HepG2 (cell line): ENCODE measurements at regions of chr16 and their contacts with region 1.

Region 1: DNA sequence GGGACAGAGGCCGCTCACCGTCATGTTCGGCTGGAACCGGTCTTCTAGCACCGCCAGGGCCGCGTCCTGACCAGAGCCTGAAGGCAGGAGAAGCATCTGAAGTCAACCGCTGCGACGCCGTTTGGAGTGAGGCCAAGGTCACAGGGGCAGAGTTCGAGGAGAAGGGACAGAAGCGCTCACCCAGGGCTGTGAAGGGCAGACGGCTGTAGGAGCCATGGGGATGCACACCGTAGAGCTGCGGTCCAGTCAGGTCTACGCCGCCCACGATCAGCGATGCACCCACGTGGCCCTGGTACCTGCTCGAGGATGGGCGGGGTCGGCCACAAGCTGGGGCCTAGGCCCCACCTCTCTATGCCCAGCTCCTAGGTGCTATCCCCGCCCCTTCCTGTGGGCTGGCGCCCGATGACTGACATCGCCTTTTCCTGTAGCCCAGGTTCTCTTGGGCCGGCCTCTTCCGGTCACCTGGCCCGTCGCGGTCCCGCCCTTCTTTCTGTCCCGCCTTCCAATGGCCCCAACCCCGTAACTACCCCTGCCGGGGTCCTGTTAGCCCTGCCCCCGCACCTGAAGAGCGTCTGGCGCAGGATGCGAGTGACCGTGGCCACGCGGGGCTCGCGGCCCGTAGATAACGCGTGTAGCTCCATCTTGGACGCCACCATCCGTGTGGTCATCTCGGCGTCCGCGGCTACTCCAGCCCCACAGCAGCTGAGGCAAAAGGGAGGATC is 1.1 kb downstream of the PSMB10 start:
- DNase-seq: peak; percentile 98
- ATAC-seq: peak; percentile 85
- H3K4me3 ChIP-seq: peak overlapping the region; percentile 86 to 97 (median 97)
- H3K27ac ChIP-seq: peak overlapping the region; percentile 70
- H3K4me1 ChIP-seq: peaks cover 30% of the 10 kb centered on the region
- H3K27me3 ChIP-seq: no peaks in the 10 kb centered on the region; a peak in 1 of 5 replicates
- CTCF ChIP-seq: peak; percentile 27
- EP300 ChIP-seq: no peak
- POLR2A ChIP-seq: peak in 1 of 2 experiments; percentile 79; a peak in 2 of 4 replicates
- RAD21 ChIP-seq: peak; percentile 34; the same call in 1 of the 2 replicates

Region 2: GRCh38 chr16:67667817-67668494 is 267.6 kb before region 1 on chr16:
- CTCF ChIA-PET with region 1: no interaction called
- POLR2A ChIA-PET with region 1: no interaction called
- in situ Hi-C with region 1: loop called (anchors 10 kb)
- intact Hi-C with region 1: no loop called
- DNase-seq: peak; percentile 96
- ATAC-seq: peak; percentile 88
- H3K4me3 ChIP-seq: peak overlapping the region; percentile 77 to 96 (median 88)
- H3K27ac ChIP-seq: peak overlapping the region; percentile 21
- H3K4me1 ChIP-seq: peaks cover 39% of the 10 kb centered on the region
- H3K27me3 ChIP-seq: no peaks in the 10 kb centered on the region; a peak in 1 of 5 replicates
- CTCF ChIP-seq: peak; percentile 99
- EP300 ChIP-seq: no peak
- POLR2A ChIP-seq: peak in 1 of 2 experiments; percentile 24; a peak in 1 of 4 replicates
- RAD21 ChIP-seq: peak; percentile 98

Region 3: DNA sequence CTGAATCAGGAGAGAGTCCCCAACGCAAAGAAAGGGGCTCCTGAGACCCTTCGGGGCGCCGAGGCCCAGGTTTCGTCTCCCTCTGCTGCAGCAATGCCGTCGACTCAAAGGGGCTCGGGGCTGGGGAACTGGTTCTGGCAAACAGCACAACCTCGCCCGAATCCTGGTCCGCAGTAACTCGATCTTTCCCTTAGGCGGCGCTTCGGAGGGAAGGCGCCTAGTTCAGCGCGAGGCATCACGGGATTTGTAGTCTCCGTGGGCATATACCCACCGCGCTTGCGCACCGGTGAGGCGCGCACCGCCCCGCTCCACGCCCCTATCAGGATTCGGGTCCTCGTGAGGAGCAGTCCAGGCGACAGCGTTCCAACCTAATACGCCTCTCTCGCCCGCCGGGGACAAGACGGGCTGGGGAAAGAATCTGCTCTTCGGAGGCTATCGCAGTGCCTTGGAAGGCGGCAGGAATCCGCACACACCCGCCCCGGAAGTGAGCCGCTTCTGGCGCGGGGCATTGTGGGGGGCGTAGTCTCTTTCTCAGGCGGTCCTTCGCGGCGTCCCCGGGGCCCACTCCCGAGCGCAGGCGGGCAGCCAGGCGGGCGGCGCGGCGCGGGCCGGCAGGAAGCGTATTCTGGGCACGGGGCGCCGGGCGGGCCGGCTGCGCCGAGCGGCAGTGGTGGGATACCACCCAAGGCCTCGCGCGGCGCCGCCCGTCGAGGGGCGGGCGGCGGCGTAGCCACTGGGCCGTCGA is 93.6 kb before region 1 on chr16 and contains the start of gene THAP11:
- CTCF ChIA-PET with region 1: no interaction called
- POLR2A ChIA-PET with region 1: interaction called, 11 read pairs
- in situ Hi-C with region 1: no loop called
- intact Hi-C with region 1: no loop called
- DNase-seq: peak; percentile 96
- ATAC-seq: peak; percentile 46
- H3K4me3 ChIP-seq: peak within 1 kb of the TSS; percentile 80 to 97 (median 92)
- H3K27ac ChIP-seq: peak within 1 kb of the TSS; percentile 92
- H3K4me1 ChIP-seq: peaks cover 52% of the 10 kb centered on the region
- H3K27me3 ChIP-seq: no peaks in the 10 kb centered on the region; a peak in 1 of 5 replicates
- CTCF ChIP-seq: peak; percentile 99
- EP300 ChIP-seq: 0 out of 4 replicates have a peak, but pooled peaks of 1 of the 2 experiments have one; percentile 2
- POLR2A ChIP-seq: peak in 1 of 2 experiments; percentile 68; a peak in 1 of 4 replicates
- RAD21 ChIP-seq: peak; percentile 54
- total RNA-seq, gene THAP11: 53.4 and 53.8 TPM in 2 replicates

Region 4: GRCh38 chr16:67968400-67969253 is 33.1 kb after region 1 on chr16 and contains the start of gene SLC12A4:
- CTCF ChIA-PET with region 1: no interaction called
- POLR2A ChIA-PET with region 1: interaction called, 226 read pairs
- in situ Hi-C with region 1: no loop called
- intact Hi-C with region 1: no loop called
- DNase-seq: peak; percentile 86
- ATAC-seq: peak; percentile 73
- H3K4me3 ChIP-seq: peak within 1 kb of the TSS; percentile 89 to 91 (median 90)
- H3K27ac ChIP-seq: peak within 1 kb of the TSS; percentile 92
- H3K4me1 ChIP-seq: peaks cover 57% of the 10 kb centered on the region
- H3K27me3 ChIP-seq: no peaks in the 10 kb centered on the region; a peak in 1 of 5 replicates
- CTCF ChIP-seq: peak; percentile 13; the same call in 1 of the 2 replicates
- EP300 ChIP-seq: peak in 1 of 2 experiments; percentile 73; a peak in 1 of 4 replicates
- POLR2A ChIP-seq: peak; percentile 66 to 81
- RAD21 ChIP-seq: peak; percentile 5; the same call in 1 of the 2 replicates
- total RNA-seq, gene SLC12A4: 23.1 and 65.1 TPM in 2 replicates

Region 5: DNA sequence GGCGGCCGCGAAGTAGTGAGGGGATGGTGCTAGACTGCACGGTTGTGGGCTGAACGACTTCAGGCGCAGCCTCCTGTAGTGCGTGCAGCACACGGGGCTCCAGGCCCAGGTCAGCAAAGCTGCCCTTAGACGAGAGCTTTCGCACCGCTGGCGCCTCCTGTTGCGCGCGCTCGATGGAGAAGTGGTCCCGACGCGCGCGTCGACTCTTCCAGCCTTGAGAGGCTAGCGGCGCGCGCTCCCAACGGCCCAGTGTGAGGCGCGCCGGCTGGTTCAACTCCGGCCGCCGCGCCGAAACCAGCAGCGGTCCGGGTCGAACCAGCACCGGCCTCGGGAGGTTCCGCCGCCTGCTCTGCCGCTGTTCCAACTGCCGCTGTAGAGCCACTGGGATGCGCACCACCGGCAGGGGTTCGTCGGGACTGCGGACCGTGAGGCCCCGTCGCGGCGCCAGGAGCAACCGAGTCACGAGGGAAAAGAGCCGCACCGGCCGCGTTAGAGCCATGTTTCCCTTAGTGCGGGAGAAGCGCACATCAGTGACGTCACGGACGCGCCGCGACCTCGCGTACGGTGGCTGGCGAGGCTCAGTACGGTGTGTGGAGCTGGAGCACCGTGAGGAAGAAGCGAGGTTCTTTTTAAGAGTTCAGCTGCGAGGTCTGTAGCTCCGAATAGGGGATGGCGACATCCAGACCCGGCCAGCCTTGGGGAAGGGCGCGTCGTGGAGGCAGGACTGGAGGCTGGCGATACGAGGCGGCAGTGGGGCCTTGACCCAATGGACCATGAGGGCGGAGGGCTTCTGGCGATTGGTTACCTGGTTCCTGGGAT is 87.3 kb after region 1 on chr16 and contains the starts of genes DDX28 and DUS2:
- CTCF ChIA-PET with region 1: no interaction called
- POLR2A ChIA-PET with region 1: interaction called, 26 read pairs
- in situ Hi-C with region 1: no loop called
- intact Hi-C with region 1: no loop called
- DNase-seq: peak; percentile 88
- ATAC-seq: peak; percentile 88
- H3K4me3 ChIP-seq: peak within 1 kb of the TSS; percentile 92 to 99 (median 92)
- H3K27ac ChIP-seq: peak within 1 kb of the TSS; percentile 83
- H3K4me1 ChIP-seq: peaks cover 24% of the 10 kb centered on the region
- H3K27me3 ChIP-seq: no peaks in the 10 kb centered on the region; a peak in 1 of 5 replicates
- CTCF ChIP-seq: peak; percentile 34; the same call in 1 of the 2 replicates
- EP300 ChIP-seq: peak; percentile 37 to 77; a peak in 2 of 4 replicates
- POLR2A ChIP-seq: peak; percentile 88 to 92
- RAD21 ChIP-seq: peak; percentile 38; the same call in 1 of the 2 replicates
- total RNA-seq, gene DDX28: 16.4 and 18.4 TPM in 2 replicates
- total RNA-seq, gene DUS2: 25.1 and 25.9 TPM in 2 replicates